SK-N-SH (cell line): ENCODE measurements at regions of chr2 and their contacts with region 1.

Region 1: GRCh38 chr2:108583903-108584520 is 49.7 kb downstream of the LIMS1 start:
- DNase-seq: peak; percentile 73
- H3K4me3 ChIP-seq: peak overlapping the region in 1 of 2 experiments; percentile 46; a peak in 1 of 4 replicates
- H3K27ac ChIP-seq: peak overlapping the region in 1 of 2 experiments; percentile 45; a peak in 2 of 4 replicates
- H3K4me1 ChIP-seq: peaks cover 6 to 29% of the 10 kb centered on the region in 2 experiments
- H3K27me3 ChIP-seq: no peaks in the 10 kb centered on the region
- CTCF ChIP-seq: peak; percentile 85
- EP300 ChIP-seq: no peak
- RAD21 ChIP-seq: peak; percentile 97

Region 2: GRCh38 chr2:108351889-108352288 is 232.1 kb before region 1 on chr2:
- CTCF ChIA-PET with region 1: interaction called, 22 read pairs
- POLR2A ChIA-PET with region 1: no interaction called
- DNase-seq: no peak
- H3K4me3 ChIP-seq: no peak overlapping the region
- H3K27ac ChIP-seq: no peak overlapping the region
- H3K4me1 ChIP-seq: no peaks in the 10 kb centered on the region; a peak in 1 of 4 replicates
- H3K27me3 ChIP-seq: no peaks in the 10 kb centered on the region
- CTCF ChIP-seq: no peak
- EP300 ChIP-seq: no peak
- RAD21 ChIP-seq: no peak

Region 3: DNA sequence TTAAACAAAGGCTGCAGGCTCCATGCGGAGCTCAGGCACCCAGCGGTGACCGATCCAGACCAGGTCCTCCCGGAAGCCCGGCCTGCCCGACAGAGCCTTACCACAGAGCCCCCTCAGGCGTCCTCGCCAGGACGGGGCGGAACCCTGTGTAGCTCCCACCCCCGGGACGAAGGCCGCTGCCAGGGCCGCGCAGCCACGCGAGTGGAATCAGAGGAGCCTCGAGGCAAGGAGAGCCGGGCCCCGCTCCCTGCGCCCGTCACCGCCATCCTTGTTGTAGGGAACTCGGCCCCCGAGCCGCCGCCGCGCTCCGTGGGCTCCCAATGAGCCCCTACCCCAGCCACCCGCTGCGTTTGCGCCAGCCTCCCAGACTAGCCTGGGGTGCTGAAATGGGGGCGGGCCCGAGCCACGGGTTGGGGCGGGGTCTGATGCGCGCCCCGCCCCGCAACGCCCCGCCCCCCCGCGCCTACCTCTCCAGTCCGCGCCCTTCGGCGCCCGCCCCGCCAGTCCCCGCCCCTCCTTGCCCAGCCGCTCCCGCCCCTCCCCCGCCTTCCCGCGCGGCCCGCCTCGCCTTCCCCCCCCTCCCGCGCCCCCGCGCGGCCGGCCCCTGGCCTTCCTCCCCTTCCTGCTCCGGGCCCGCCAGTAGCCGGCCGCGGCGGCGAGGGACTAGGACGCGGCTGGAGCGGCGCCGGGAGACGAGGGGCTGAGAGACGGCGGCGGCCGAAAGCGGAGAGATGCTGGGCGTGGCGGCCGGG is 50.0 kb before region 1 on chr2 and contains the start of gene LIMS1:
- CTCF ChIA-PET with region 1: interaction called, 14 read pairs
- POLR2A ChIA-PET with region 1: no interaction called
- DNase-seq: peak; percentile 97
- H3K4me3 ChIP-seq: peak within 1 kb of the TSS; percentile 87 to 98
- H3K27ac ChIP-seq: peak within 1 kb of the TSS; percentile 88 to 96
- H3K4me1 ChIP-seq: peaks cover 12% of the 10 kb centered on the region in 2 experiments; a peak in 3 of 4 replicates
- H3K27me3 ChIP-seq: no peaks in the 10 kb centered on the region
- CTCF ChIP-seq: no peak
- EP300 ChIP-seq: no peak
- RAD21 ChIP-seq: no peak
- polyA plus RNA-seq, gene LIMS1: 123 and 131 TPM in 2 replicates

Region 4: DNA sequence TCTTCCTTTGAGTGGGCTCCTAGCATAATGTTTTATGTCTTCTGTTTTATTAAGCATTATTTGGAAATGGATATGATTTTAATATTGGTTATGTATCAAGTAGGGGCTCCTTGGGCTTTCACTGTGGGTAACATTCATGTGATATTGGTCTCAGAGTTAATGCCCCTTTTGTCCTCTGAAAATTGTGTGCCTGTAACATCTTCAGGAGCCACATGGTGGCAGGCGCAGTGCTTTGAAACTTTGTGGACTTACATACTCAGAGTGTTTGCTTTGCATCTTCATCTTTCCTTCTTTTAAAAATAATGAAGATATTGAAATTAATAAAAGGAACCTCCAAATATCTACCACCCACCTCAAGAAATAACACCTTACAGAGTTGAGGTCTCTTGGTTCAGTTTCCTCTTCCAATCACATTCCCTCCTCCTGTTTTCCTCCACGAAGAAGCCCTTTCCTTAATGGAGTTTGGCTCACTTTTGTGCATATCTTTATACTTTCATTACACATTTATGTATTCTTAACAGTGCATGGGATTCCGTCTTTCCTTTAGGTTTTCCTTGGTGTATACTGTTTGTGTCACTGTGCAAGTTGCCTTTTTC is 23.8 kb after region 1 on chr2:
- CTCF ChIA-PET with region 1: interaction called, 12 read pairs
- POLR2A ChIA-PET with region 1: no interaction called
- DNase-seq: peak; percentile 33
- H3K4me3 ChIP-seq: no peak overlapping the region; a peak in 1 of 4 replicates
- H3K27ac ChIP-seq: no peak overlapping the region
- H3K4me1 ChIP-seq: peaks cover 0 to 6% of the 10 kb centered on the region in 2 experiments; a peak in 2 of 4 replicates
- H3K27me3 ChIP-seq: no peaks in the 10 kb centered on the region
- CTCF ChIP-seq: peak; percentile 74
- EP300 ChIP-seq: no peak
- RAD21 ChIP-seq: peak; percentile 78